H1 (cell line): ENCODE measurements at regions of chr10 and their contacts with region 1.

Region 1: DNA sequence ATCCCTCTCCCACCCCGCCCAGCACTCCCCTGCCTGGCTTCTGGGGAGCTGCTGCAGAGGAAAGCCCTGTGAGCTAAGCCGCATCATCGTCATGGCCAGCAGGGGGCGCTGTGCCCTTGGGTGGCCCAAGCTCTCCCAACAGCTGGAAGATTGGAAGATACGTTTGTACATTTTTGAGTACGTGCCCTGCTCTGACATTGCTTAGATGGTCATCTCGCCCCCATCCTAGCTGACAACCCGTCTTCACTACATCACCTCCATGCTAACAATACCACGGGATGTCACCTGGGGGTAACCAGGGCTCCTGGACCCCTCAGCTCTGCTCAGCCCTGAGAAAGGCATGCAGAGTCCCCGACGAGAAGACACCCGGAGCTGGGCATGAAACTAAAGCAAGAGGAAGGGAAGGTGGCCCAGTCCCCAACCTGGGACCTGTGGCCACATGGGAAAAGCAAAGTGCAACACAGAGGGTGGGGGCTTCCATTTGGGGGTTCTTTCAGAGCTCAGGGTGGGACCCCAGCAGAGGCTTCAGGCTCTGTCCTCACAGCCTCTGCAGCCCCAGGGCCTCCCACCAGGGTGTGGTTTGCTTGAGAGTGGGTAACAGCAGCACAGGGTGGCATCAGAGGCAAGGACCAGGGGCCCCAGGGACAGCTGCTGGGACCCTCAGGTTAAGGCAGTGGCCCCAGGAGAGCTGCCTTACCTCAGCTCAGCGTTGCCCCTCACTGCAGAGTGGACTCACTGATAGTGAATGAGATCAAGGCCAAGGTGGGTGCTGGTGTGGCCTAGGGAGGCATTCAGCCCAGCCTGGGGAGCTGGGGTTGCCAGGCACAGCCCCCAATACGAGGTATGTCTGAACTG is 136.7 kb downstream of the PTPN20 start:
- DNase-seq: peak; percentile 34 to 90
- H3K4me3 ChIP-seq: no peak overlapping the region
- H3K27ac ChIP-seq: no peak overlapping the region
- H3K4me1 ChIP-seq: no peaks in the 10 kb centered on the region
- H3K27me3 ChIP-seq: no peaks in the 10 kb centered on the region
- CTCF ChIP-seq: peak; percentile 88 to 96 (median 91)
- EP300 ChIP-seq: no peak
- POLR2A ChIP-seq: no peak
- RAD21 ChIP-seq: peak; percentile 85 to 87

Region 2: DNA sequence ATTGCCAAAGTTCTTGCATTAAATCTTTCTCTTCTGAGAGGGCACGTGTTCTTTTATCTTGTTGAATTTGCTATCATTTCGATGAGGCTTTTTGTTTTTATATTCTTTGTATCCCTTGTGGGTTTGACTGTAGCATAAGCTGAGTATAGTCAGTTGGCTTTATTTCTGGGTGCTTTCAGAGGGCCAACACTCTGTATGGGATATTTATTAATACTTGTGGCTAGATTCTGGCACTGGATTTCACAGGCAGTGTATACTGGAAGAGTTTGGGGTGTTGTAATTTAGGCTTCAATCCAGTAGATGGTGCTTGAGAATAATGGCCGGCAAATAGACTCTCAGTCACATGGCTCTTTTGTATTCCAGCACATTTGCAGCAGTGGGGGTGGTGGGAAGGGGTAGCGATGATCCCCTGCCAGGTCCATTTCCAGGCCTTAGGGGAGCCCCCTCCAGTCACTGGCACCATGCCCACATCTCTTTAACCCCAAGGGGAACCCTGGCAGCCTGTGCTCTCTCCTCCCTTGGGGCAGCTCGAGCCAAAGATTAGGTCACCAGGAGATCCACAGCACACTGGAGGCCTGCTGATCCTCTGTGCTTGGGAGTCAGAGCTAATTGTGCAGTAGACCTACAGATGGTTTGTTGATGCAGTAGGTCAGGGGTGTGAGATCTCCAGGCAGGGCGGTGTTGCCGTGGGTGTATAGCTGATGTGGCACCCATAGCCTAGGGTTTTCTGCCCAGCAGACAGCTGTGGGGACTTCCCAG is 54.9 kb before region 1 on chr10:
- CTCF ChIA-PET with region 1: interaction called, 33 read pairs
- POLR2A ChIA-PET with region 1: no interaction called
- DNase-seq: peak in 1 of 2 experiments; percentile 56
- H3K4me3 ChIP-seq: no peak overlapping the region
- H3K27ac ChIP-seq: no peak overlapping the region
- H3K4me1 ChIP-seq: peaks cover 0 to 6% (median 2%) of the 10 kb centered on the region in 4 experiments; a peak in 3 of 7 replicates
- H3K27me3 ChIP-seq: no peaks in the 10 kb centered on the region
- CTCF ChIP-seq: peak in 2 of 3 experiments; percentile 43 to 60; a peak in 2 of 4 replicates
- EP300 ChIP-seq: no peak
- POLR2A ChIP-seq: no peak
- RAD21 ChIP-seq: peak; percentile 42 to 52; a peak in 3 of 4 replicates

Region 3: GRCh38 chr10:47031211-47031900 is 16.5 kb before region 1 on chr10:
- CTCF ChIA-PET with region 1: interaction called, 69 read pairs
- POLR2A ChIA-PET with region 1: no interaction called
- DNase-seq: peak in 1 of 2 experiments; percentile 45
- H3K4me3 ChIP-seq: no peak overlapping the region
- H3K27ac ChIP-seq: no peak overlapping the region
- H3K4me1 ChIP-seq: no peaks in the 10 kb centered on the region
- H3K27me3 ChIP-seq: no peaks in the 10 kb centered on the region
- CTCF ChIP-seq: peak in 2 of 3 experiments; percentile 25 to 44; a peak in 3 of 4 replicates
- EP300 ChIP-seq: no peak
- POLR2A ChIP-seq: no peak
- RAD21 ChIP-seq: peak in 1 of 2 experiments; percentile 29; a peak in 2 of 4 replicates

Region 4: GRCh38 chr10:47107007-47107747 is 59.3 kb after region 1 on chr10:
- CTCF ChIA-PET with region 1: interaction called, 12 read pairs
- POLR2A ChIA-PET with region 1: no interaction called
- DNase-seq: peak in 1 of 2 experiments; percentile 28
- H3K4me3 ChIP-seq: no peak overlapping the region
- H3K27ac ChIP-seq: no peak overlapping the region
- H3K4me1 ChIP-seq: no peaks in the 10 kb centered on the region
- H3K27me3 ChIP-seq: no peaks in the 10 kb centered on the region
- CTCF ChIP-seq: no peak
- EP300 ChIP-seq: no peak
- POLR2A ChIP-seq: no peak
- RAD21 ChIP-seq: no peak

Region 5: GRCh38 chr10:47145290-47145934 is 97.5 kb after region 1 on chr10:
- CTCF ChIA-PET with region 1: no interaction called
- POLR2A ChIA-PET with region 1: no interaction called
- DNase-seq: no peak
- H3K4me3 ChIP-seq: no peak overlapping the region
- H3K27ac ChIP-seq: no peak overlapping the region
- H3K4me1 ChIP-seq: no peaks in the 10 kb centered on the region
- H3K27me3 ChIP-seq: no peaks in the 10 kb centered on the region
- CTCF ChIP-seq: no peak
- EP300 ChIP-seq: no peak
- POLR2A ChIP-seq: no peak
- RAD21 ChIP-seq: no peak

Region 6: DNA sequence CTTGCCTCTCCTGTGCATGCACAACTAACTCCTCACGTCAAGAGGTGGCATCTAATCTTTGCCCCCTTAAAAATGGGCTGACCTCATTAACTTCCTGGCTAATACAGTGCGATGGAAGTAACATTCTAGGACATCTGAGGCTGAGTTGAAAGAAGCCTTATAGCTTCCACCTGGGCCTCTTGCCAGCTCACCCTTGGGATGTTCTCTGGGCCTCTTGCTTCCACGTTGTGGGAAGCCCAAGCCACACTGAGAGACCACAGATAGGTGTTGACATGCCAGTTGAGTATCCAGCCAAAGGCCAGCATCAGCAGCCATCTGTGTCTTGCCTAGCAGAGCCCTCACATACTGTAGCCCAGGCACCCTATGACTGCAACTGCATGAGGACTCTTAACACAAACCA is 191.3 kb after region 1 on chr10:
- CTCF ChIA-PET with region 1: interaction called, 15 read pairs
- POLR2A ChIA-PET with region 1: no interaction called
- DNase-seq: no peak
- H3K4me3 ChIP-seq: no peak overlapping the region
- H3K27ac ChIP-seq: no peak overlapping the region
- H3K4me1 ChIP-seq: no peaks in the 10 kb centered on the region; a peak in 2 of 7 replicates
- H3K27me3 ChIP-seq: 0 out of 7 replicates have a peak, but pooled peaks cover 0 to 2% (median 0%) of the 10 kb centered on the region in 4 experiments
- CTCF ChIP-seq: no peak
- EP300 ChIP-seq: no peak
- POLR2A ChIP-seq: no peak
- RAD21 ChIP-seq: no peak

Region 7: GRCh38 chr10:47300429-47300931 is 252.6 kb after region 1 on chr10:
- CTCF ChIA-PET with region 1: interaction called, 24 read pairs
- POLR2A ChIA-PET with region 1: no interaction called
- DNase-seq: peak in 1 of 2 experiments; percentile 63
- H3K4me3 ChIP-seq: peak overlapping the region; percentile 45 to 64 (median 49)
- H3K27ac ChIP-seq: no peak overlapping the region
- H3K4me1 ChIP-seq: peaks cover 0 to 4% (median 2%) of the 10 kb centered on the region in 4 experiments; a peak in 1 of 7 replicates
- H3K27me3 ChIP-seq: peaks cover 4 to 42% (median 34%) of the 10 kb centered on the region in 4 experiments
- CTCF ChIP-seq: peak; percentile 17 to 35 (median 21); a peak in 3 of 4 replicates
- EP300 ChIP-seq: no peak
- POLR2A ChIP-seq: no peak
- RAD21 ChIP-seq: 0 out of 4 replicates have a peak, but pooled peaks of 1 of the 2 experiments have one; percentile 5

Region 8: GRCh38 chr10:47311932-47312662 is 264.2 kb after region 1 on chr10:
- CTCF ChIA-PET with region 1: interaction called, 201 read pairs
- POLR2A ChIA-PET with region 1: no interaction called
- DNase-seq: peak; percentile 59 to 87
- H3K4me3 ChIP-seq: no peak overlapping the region
- H3K27ac ChIP-seq: no peak overlapping the region
- H3K4me1 ChIP-seq: peaks cover 0 to 5% (median 0%) of the 10 kb centered on the region in 4 experiments; a peak in 3 of 7 replicates
- H3K27me3 ChIP-seq: no peaks in the 10 kb centered on the region
- CTCF ChIP-seq: peak; percentile 86 to 96 (median 95)
- EP300 ChIP-seq: no peak
- POLR2A ChIP-seq: no peak
- RAD21 ChIP-seq: peak; percentile 96 to 97